B cell (primary cell): ENCODE measurements at regions of chr3 and their contacts with region 1.

Region 1: GRCh38 chr3:129238945-129239706 is 10.3 kb upstream of the COPG1 start:
- DNase-seq: peak; percentile 33
- ATAC-seq: no peak
- H3K4me3 ChIP-seq: no peak overlapping the region
- H3K4me3 Mint-ChIP-seq: peak overlapping the region; percentile 10
- H3K27ac ChIP-seq: no peak overlapping the region
- H3K27ac Mint-ChIP-seq: peak overlapping the region; percentile 56
- H3K4me1 ChIP-seq: peaks cover 26 to 35% of the 10 kb centered on the region in 2 donors
- H3K4me1 Mint-ChIP-seq: peaks cover 27% of the 10 kb centered on the region
- H3K27me3 ChIP-seq: no peaks in the 10 kb centered on the region
- H3K27me3 Mint-ChIP-seq: no peaks in the 10 kb centered on the region
- CTCF ChIP-seq: no peak

Region 2: GRCh38 chr3:129058441-129059200 is 180.5 kb before region 1 on chr3:
- CTCF ChIA-PET with region 1: interaction called, 294 read pairs
- POLR2A ChIA-PET with region 1: no interaction called
- intact Hi-C with region 1: no loop called
- DNase-seq: peak; percentile 53
- ATAC-seq: peak; percentile 45
- H3K4me3 ChIP-seq: no peak overlapping the region
- H3K4me3 Mint-ChIP-seq: no peak overlapping the region
- H3K27ac ChIP-seq: no peak overlapping the region
- H3K27ac Mint-ChIP-seq: no peak overlapping the region
- H3K4me1 ChIP-seq: peaks cover 5 to 21% of the 10 kb centered on the region in 2 donors
- H3K4me1 Mint-ChIP-seq: peaks cover 10% of the 10 kb centered on the region
- H3K27me3 ChIP-seq: peaks cover 0 to 29% (median 7%) of the 10 kb centered on the region in 4 experiments
- H3K27me3 Mint-ChIP-seq: peaks cover 35% of the 10 kb centered on the region
- CTCF ChIP-seq: no peak

Region 3: GRCh38 chr3:129218742-129219141 is 20.4 kb before region 1 on chr3:
- CTCF ChIA-PET with region 1: no interaction called
- POLR2A ChIA-PET with region 1: no interaction called
- intact Hi-C with region 1: no loop called
- DNase-seq: no peak
- ATAC-seq: no peak
- H3K4me3 ChIP-seq: no peak overlapping the region
- H3K4me3 Mint-ChIP-seq: no peak overlapping the region
- H3K27ac ChIP-seq: no peak overlapping the region
- H3K27ac Mint-ChIP-seq: no peak overlapping the region
- H3K4me1 ChIP-seq: no peaks in the 10 kb centered on the region
- H3K4me1 Mint-ChIP-seq: no peaks in the 10 kb centered on the region
- H3K27me3 ChIP-seq: no peaks in the 10 kb centered on the region
- H3K27me3 Mint-ChIP-seq: no peaks in the 10 kb centered on the region
- CTCF ChIP-seq: no peak